ENCODE measurements at regions of chr16 and their contacts with region 1.

Region 1: DNA sequence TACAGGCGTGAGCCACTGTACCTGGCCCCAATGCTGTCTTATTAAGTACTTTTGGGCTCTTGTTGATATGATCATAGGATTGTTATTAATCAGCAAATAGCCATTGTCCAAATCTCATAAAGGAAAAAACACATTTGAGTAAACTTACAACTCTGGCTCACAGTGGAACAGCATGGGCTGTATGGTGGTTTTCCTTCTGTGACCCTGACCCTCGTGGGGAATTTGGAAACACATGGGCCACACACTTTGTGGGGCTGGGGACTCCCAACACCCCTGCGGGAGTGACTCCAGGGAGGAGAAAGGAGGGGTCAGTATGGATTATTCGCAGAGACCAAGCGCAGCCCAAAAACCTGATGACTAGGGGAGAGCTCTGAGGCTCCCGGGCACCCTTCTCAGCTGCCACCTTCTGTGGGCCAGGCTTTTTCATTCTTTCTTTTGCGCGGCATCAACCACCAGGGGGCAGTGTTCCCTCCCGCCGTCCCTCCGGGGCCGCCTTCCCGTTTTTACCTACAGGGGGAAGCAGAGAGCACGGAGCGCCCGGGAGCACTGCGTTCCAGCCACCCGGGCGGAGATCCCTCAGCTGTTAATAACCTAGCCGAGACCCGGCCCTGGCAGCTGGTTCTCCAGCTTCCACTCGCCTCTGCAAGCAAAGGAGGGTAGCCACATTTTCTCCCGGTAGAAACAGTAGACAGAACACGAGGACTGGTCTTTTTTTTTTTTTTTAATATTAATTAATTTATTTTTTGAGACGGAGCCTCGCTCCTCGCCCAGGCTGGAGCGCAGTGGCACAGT is 9.7 kb downstream of the TSNAXIP1 start:
- DNase-seq: peak; percentile 91
- H3K4me3 Mint-ChIP-seq: no peak overlapping the region
- H3K27ac Mint-ChIP-seq: no peak overlapping the region
- H3K4me1 Mint-ChIP-seq: peaks cover 6% of the 10 kb centered on the region
- H3K27me3 Mint-ChIP-seq: peaks cover 4% of the 10 kb centered on the region

Region 2: GRCh38 chr16:67672739-67673662 is 143.4 kb before region 1 on chr16:
- CTCF ChIA-PET with region 1: interaction called, 12 read pairs
- POLR2A ChIA-PET with region 1: no interaction called
- DNase-seq: peak; percentile 72
- H3K4me3 Mint-ChIP-seq: no peak overlapping the region
- H3K27ac Mint-ChIP-seq: no peak overlapping the region
- H3K4me1 Mint-ChIP-seq: peaks cover 5% of the 10 kb centered on the region
- H3K27me3 Mint-ChIP-seq: no peaks in the 10 kb centered on the region

Region 3: DNA sequence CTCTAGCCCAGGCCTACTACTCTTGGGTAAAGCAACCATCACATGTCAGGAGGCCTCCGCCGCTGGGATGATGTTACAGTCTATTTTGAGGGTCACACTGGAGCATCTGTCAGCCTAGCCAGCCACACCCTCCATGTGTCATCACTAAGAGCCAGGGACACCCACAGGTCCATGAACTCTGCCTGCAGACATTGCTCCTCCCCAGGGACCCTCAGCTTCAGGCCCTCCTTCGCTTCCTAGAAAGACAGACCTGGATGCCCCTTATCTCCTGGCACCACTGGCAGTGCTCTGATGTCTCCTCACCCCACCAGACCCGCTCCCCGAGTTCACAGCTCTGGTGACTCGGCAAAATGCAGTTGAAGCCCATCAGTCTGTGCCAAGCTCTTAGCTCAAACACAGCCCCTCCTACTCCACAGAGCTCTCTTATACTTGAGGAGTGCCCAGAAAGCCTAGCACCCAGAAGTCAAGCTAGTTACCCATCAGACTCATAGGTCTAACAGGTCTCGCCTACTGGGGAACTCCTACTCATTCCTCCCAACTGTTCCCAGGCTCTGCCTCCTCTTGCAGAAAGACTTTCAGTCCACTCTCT is 16.0 kb before region 1 on chr16:
- CTCF ChIA-PET with region 1: interaction called, 46 read pairs
- POLR2A ChIA-PET with region 1: interaction called, 5 read pairs
- DNase-seq: no peak
- H3K4me3 Mint-ChIP-seq: no peak overlapping the region
- H3K27ac Mint-ChIP-seq: peak overlapping the region; percentile 79
- H3K4me1 Mint-ChIP-seq: peaks cover 55% of the 10 kb centered on the region
- H3K27me3 Mint-ChIP-seq: no peaks in the 10 kb centered on the region

Region 4: GRCh38 chr16:67865316-67865715 is 48.9 kb after region 1 on chr16:
- CTCF ChIA-PET with region 1: interaction called, 29 read pairs
- POLR2A ChIA-PET with region 1: interaction called, 3 read pairs
- DNase-seq: peak; percentile 29
- H3K4me3 Mint-ChIP-seq: no peak overlapping the region
- H3K27ac Mint-ChIP-seq: no peak overlapping the region
- H3K4me1 Mint-ChIP-seq: peaks cover 15% of the 10 kb centered on the region
- H3K27me3 Mint-ChIP-seq: no peaks in the 10 kb centered on the region

Region 5: DNA sequence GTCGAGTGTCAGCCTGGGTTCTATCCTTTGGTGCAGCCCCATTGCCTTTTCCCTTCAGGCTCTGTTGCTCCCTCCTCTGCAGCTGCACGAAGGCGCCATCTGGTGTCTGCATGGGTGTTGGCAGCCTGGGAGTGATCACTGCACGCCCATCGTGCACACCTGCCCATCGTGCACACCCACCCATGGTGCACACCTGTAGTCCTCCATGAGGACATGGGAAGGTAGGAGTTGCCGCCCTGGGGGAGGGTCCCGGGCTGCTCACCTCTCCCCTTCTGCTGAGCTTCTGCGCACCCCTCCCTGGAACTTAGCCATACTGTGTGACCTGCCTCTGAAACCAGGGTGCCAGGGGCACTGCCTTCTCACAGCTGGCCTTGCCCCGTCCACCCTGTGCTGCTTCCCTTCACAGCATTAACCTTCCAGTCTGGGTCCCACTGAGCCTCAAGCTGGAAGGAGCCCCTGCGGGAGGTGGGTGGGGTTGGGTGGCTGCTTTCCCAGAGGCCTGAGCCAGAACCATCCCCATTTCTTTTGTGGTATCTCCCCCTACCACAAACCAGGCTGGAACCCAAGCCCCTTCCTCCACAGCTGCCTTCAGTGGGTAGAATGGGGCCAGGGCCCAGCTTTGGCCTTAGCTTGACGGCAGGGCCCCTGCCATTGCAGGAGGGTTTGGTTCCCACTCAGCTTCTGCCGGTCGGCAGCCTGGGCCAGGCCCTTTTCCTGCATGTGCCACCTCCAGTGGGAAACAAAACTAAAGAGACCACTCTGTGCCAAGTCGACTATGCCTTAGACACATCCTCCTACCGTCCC is 112.3 kb after region 1 on chr16:
- CTCF ChIA-PET with region 1: interaction called, 10 read pairs
- POLR2A ChIA-PET with region 1: no interaction called
- DNase-seq: peak; percentile 82
- H3K4me3 Mint-ChIP-seq: no peak overlapping the region
- H3K27ac Mint-ChIP-seq: no peak overlapping the region
- H3K4me1 Mint-ChIP-seq: peaks cover 2% of the 10 kb centered on the region
- H3K27me3 Mint-ChIP-seq: no peaks in the 10 kb centered on the region

Measured in activated CD4-positive, alpha-beta memory T cell treated with anti-CD3 and anti-CD28 coated beads, Interleukin-2, amount 10 ng/mL, durations not matched to agents 7 days and 5 days (primary cell).